Naive thymus-derived CD4-positive, alpha-beta T cell (primary cell): ENCODE measurements at regions of chr12 and their contacts with region 1.

Region 1: GRCh38 chr12:53220801-53221202 is 11.2 kb downstream of the RARG start:
- DNase-seq: peak in 8 of 9 donors; percentile 51 to 85 (median 55)
- ATAC-seq: peak; percentile 79
- H3K4me3 ChIP-seq: peak overlapping the region; percentile 95
- H3K4me3 Mint-ChIP-seq: peak overlapping the region; percentile 94 to 100 (median 98)
- H3K27ac ChIP-seq: peak overlapping the region; percentile 78
- H3K27ac Mint-ChIP-seq: peak overlapping the region; percentile 84 to 98 (median 94)
- H3K4me1 ChIP-seq: peaks cover 55 to 63% of the 10 kb centered on the region in 2 donors
- H3K4me1 Mint-ChIP-seq: peaks cover 50 to 80% (median 77%) of the 10 kb centered on the region in 7 donors
- H3K27me3 ChIP-seq: no peaks in the 10 kb centered on the region
- H3K27me3 Mint-ChIP-seq: no peaks in the 10 kb centered on the region

Region 2: DNA sequence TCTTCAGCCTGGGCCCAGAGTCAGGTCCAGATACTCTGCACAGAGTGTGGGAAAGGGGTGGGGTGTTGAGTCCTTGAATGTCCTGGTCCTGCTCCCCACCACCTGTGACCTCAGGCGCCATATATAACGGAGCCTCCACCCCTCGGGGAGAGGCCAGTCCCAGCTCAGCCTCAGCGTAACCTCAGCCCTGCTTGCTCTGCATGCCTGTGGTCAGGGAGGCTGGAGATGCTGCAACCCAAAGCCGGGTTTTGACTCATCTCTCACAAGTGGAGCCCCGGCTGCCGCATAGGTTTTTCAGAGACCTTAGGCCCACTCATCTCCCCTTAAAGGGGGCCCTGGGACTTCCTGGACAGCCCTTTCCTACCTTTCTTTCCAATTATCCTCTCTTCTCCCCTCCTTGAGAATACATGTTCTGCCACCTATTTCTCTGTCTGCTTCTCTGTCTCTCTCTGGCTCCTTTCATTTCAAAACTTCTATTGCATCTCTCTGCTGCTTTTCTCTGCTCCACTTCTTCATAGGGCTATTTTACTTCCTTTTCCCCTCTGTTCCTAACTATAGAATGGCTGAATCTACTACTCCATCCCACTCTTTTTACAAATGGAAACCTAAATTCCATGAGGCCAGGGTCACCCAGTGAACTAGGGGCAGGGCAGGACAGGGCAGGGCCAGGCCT is 14.9 kb before region 1 on chr12:
- CTCF ChIA-PET with region 1: interaction called, 88 read pairs
- POLR2A ChIA-PET with region 1: interaction called, 103 read pairs
- intact Hi-C with region 1: loop called (anchors 1 kb)
- DNase-seq: peak in 1 of 9 donors; percentile 75
- ATAC-seq: peak; percentile 68
- H3K4me3 ChIP-seq: peak overlapping the region; percentile 84
- H3K4me3 Mint-ChIP-seq: peak overlapping the region; percentile 83 to 92 (median 86)
- H3K27ac ChIP-seq: peak overlapping the region; percentile 85
- H3K27ac Mint-ChIP-seq: peak overlapping the region; percentile 61 to 90 (median 87)
- H3K4me1 ChIP-seq: peaks cover 63 to 73% of the 10 kb centered on the region in 2 donors
- H3K4me1 Mint-ChIP-seq: peaks cover 53 to 84% (median 71%) of the 10 kb centered on the region in 7 donors
- H3K27me3 ChIP-seq: no peaks in the 10 kb centered on the region
- H3K27me3 Mint-ChIP-seq: no peaks in the 10 kb centered on the region

Region 3: GRCh38 chr12:53251477-53252348 is 30.9 kb after region 1 on chr12:
- CTCF ChIA-PET with region 1: interaction called, 121 read pairs
- POLR2A ChIA-PET with region 1: interaction called, 28 read pairs
- intact Hi-C with region 1: loop called (anchors 1 kb)
- DNase-seq: peak; percentile 58 to 81 (median 69)
- ATAC-seq: peak; percentile 90
- H3K4me3 ChIP-seq: peak overlapping the region; percentile 95
- H3K4me3 Mint-ChIP-seq: peak overlapping the region; percentile 89 to 98 (median 96)
- H3K27ac ChIP-seq: peak overlapping the region; percentile 95
- H3K27ac Mint-ChIP-seq: peak overlapping the region; percentile 84 to 97 (median 94)
- H3K4me1 ChIP-seq: peaks cover 26 to 38% of the 10 kb centered on the region in 2 donors
- H3K4me1 Mint-ChIP-seq: peaks cover 37 to 59% (median 48%) of the 10 kb centered on the region in 7 donors
- H3K27me3 ChIP-seq: no peaks in the 10 kb centered on the region
- H3K27me3 Mint-ChIP-seq: no peaks in the 10 kb centered on the region

Region 4: GRCh38 chr12:53287741-53288216 is 67.0 kb after region 1 on chr12:
- CTCF ChIA-PET with region 1: interaction called, 159 read pairs
- POLR2A ChIA-PET with region 1: interaction called, 4 read pairs
- intact Hi-C with region 1: no loop called
- DNase-seq: peak; percentile 43 to 76 (median 69)
- ATAC-seq: peak; percentile 94
- H3K4me3 ChIP-seq: no peak overlapping the region
- H3K4me3 Mint-ChIP-seq: no peak overlapping the region
- H3K27ac ChIP-seq: no peak overlapping the region
- H3K27ac Mint-ChIP-seq: peak overlapping the region in 4 of 9 donors; percentile 8 to 86 (median 25)
- H3K4me1 ChIP-seq: no peaks in the 10 kb centered on the region
- H3K4me1 Mint-ChIP-seq: peaks cover 4 to 11% (median 5%) of the 10 kb centered on the region in 7 donors
- H3K27me3 ChIP-seq: no peaks in the 10 kb centered on the region
- H3K27me3 Mint-ChIP-seq: no peaks in the 10 kb centered on the region

Region 5: DNA sequence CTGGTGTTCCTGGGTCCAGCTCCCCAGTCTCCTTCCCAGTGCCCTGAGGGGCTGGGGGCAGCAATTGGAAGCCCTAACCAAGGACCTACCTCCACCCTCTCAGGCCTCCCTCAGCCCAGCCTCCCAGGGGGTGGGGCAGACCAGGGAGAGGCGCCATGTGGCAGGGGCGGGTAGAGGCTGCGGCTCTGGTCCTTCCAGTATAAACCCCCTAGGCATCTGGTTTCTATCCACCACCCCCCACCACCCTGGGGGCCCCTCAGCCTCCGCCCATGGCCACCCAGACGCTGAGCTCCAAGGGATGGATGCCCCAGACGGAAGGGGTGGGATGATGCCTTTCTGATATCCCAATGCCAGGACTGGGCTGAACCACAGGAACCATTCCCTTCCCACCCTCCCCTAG is 118.1 kb after region 1 on chr12:
- CTCF ChIA-PET with region 1: no interaction called
- POLR2A ChIA-PET with region 1: no interaction called
- intact Hi-C with region 1: no loop called
- DNase-seq: no peak
- ATAC-seq: no peak
- H3K4me3 ChIP-seq: no peak overlapping the region
- H3K4me3 Mint-ChIP-seq: no peak overlapping the region
- H3K27ac ChIP-seq: no peak overlapping the region
- H3K27ac Mint-ChIP-seq: no peak overlapping the region
- H3K4me1 ChIP-seq: peaks cover 0 to 5% of the 10 kb centered on the region in 2 donors
- H3K4me1 Mint-ChIP-seq: peaks cover 9 to 22% (median 16%) of the 10 kb centered on the region in 7 donors
- H3K27me3 ChIP-seq: peaks cover 5 to 8% of the 10 kb centered on the region in 2 donors
- H3K27me3 Mint-ChIP-seq: peaks cover 26 to 56% (median 33%) of the 10 kb centered on the region in 5 donors